Right ventricle myocardium superior (tissue), 1 donor: ENCODE measurements at regions of chr3 and their contacts with region 1.

Region 1: GRCh38 chr3:191244242-191244867 is 45.3 kb downstream of the OSTN start:
- DNase-seq: no peak
- ATAC-seq: no peak

Region 2: DNA sequence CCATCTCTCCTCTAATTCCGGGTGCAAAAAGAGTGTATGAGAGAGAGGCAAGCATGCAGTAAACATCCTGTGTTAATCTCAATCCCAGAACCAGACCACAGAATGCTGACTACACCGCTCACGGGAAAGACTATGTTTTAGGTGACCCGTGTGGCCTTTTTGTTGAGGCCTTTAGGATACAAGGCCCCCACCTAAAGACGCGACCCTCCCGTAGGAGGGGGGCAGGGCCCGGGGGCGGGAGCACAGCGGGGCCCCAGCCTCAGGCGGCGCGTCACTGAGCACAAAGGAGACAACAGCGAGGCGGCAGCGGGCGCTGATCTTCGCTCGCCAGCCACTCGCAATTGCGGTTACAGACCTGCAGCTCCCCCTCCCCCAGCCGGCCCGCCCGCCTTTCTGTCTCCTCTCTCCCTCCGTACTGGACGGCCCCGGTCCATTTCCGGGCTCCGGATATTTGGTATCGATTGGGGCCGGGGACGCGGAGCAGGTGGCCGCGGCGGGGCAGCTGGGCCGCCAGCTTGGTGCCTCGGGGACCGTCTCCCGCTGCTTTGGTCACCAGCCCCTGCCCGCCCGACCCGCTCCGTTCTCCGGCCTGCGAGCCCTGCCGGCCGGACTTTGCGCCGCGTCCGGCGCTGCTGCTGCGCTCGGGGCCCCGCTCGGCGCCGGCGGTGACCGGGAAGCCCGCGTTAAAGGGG is 84.8 kb after region 1 on chr3 and contains the start of gene CCDC50:
- intact Hi-C with region 1: loop called (anchors 10 kb)
- DNase-seq: peak; percentile 94
- ATAC-seq: peak; percentile 93
- total RNA-seq, gene CCDC50: 50.8 TPM

Region 3: DNA sequence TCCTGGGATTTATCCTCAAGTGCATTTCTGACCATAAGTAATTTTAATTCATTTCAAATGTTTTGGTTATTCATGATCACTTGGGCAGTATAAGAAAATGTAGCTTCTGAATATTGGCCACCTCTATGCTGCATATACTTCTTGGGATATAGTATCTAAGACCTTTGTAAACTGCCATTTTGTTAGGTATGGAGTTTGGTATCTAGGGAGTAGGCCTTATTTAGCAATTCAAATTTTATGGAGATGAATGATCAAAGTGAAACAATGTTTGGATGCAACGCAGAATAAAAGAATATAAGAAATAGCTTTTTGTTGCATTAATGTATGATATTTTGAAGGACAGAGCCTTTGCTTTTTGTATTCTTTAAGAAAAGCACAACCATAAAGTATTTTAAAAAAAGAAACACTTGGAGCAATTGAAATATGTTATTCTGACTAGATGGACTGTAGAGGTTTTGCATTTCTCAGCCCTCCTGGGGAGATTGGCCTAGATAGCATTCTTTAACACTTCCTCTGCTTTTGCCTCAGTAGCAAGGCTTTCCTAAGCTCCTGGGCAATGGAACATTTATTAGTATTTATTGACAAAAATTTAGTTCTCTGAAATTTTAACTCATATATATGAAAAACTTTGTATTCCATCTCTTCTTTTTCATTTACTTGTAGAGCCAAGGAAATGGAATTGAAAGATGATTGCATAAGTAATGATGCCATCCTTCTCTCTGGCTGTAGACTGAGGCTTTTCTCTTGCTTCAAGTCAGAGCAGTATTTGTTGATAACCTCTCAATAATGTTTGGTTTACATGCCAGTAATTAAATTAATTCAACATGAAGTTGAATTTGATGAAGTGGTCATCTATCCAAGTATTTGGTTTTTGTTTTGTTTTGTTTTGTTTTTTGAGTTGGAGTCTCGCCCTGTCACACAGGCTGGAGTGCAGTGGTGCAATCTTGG is 147.8 kb after region 1 on chr3:
- intact Hi-C with region 1: loop called (anchors 10 kb)
- DNase-seq: no peak
- ATAC-seq: no peak